PC-3 (cell line): ENCODE measurements at regions of chr10 and their contacts with region 1.

Region 1: DNA sequence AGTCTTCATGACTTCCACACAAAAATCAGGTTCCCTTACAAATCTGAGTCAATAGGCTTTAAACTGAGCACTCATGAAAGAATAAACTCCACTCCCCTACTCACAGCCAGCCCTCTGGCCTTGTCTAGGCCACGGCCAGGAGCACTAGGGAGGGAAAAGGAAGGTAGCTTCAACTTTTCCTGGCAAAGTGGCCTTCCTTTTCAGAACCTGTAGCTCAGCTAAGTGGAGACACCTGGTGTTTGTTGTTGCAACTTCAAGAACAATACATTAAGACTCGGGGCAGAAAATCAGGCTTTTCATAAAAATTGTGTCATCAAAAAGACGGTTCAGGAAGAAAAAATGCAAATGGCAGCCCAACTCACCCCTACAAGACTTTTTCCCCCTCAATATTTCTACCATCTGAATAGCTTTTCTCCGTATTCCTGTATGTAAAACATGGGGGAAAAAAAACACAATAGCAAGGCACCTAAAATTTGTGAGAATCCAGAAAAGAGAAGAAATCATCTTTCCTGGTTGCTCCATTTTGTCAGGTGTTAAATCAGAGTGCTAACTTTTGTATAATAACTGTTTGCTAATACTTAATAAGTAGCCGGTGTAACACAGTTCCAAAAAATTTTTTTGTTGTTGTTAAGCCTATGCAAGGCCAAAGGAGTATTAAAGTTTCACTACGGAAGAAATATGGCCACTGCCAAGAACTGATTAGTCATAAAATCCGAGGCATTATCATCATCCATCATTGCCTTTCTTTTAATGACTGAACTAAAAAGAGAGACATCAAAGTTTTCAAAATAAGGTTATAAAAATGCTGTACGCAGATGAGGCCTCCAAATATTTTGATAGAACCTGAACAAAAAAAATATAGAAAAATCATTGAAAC is 66.2 kb upstream of the ARID5B start:
- DNase-seq: peak; percentile 96
- ATAC-seq: peak; percentile 34
- H3K4me3 ChIP-seq: peak overlapping the region; percentile 25
- H3K27ac ChIP-seq: peak overlapping the region; percentile 66
- H3K4me1 ChIP-seq: peaks cover 50% of the 10 kb centered on the region
- H3K27me3 ChIP-seq: no peaks in the 10 kb centered on the region
- CTCF ChIP-seq: peak; percentile 99

Region 2: GRCh38 chr10:61465901-61466632 is 369.2 kb before region 1 on chr10:
- CTCF ChIA-PET with region 1: no interaction called
- POLR2A ChIA-PET with region 1: no interaction called
- intact Hi-C with region 1: loop called (anchors 5 kb)
- DNase-seq: no peak
- ATAC-seq: no peak
- H3K4me3 ChIP-seq: no peak overlapping the region
- H3K27ac ChIP-seq: no peak overlapping the region
- H3K4me1 ChIP-seq: peaks cover 29% of the 10 kb centered on the region
- H3K27me3 ChIP-seq: no peaks in the 10 kb centered on the region
- CTCF ChIP-seq: peak; percentile 53

Region 3: DNA sequence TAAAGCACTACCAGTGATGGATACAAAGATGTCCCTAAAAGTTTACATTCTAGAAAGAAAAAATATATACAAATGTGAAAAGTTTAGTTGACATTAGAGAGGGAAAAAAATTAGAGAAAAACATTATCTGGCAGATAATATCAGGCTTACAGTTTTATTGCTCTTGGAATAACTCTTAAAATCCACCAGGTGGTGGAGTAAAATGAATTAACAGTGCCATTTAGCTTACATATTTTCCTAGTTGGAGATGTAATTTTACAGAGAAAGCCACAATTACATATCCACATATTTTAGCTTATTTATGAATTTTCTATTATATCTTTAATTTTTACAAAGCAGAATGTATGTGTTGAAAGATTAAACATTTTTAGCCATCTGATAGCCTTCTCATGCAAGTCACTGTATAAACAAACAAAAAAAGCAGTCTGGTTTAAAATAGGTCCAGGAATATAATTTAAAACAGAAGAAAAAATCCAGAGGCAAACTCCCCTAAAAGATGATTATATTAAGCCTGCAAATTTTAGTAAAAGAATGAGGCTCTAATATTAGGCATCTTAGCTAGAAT is 166.1 kb before region 1 on chr10:
- CTCF ChIA-PET with region 1: no interaction called
- POLR2A ChIA-PET with region 1: no interaction called
- intact Hi-C with region 1: loop called (anchors 1 kb)
- DNase-seq: no peak
- ATAC-seq: peak; percentile 49; the same call in 1 of the 2 replicates
- H3K4me3 ChIP-seq: no peak overlapping the region
- H3K27ac ChIP-seq: no peak overlapping the region
- H3K4me1 ChIP-seq: no peaks in the 10 kb centered on the region
- H3K27me3 ChIP-seq: no peaks in the 10 kb centered on the region
- CTCF ChIP-seq: peak; percentile 56

Region 4: GRCh38 chr10:61793760-61794703 is 41.3 kb before region 1 on chr10:
- CTCF ChIA-PET with region 1: interaction called, 3 read pairs
- POLR2A ChIA-PET with region 1: interaction called, 3 read pairs
- intact Hi-C with region 1: loop called (anchors 1 kb)
- DNase-seq: peak; percentile 72
- ATAC-seq: peak; percentile 82
- H3K4me3 ChIP-seq: no peak overlapping the region
- H3K27ac ChIP-seq: no peak overlapping the region
- H3K4me1 ChIP-seq: peaks cover 23% of the 10 kb centered on the region
- H3K27me3 ChIP-seq: no peaks in the 10 kb centered on the region
- CTCF ChIP-seq: no peak

Region 5: GRCh38 chr10:61937631-61938351 is 102.5 kb after region 1 on chr10:
- CTCF ChIA-PET with region 1: interaction called, 20 read pairs
- POLR2A ChIA-PET with region 1: no interaction called
- intact Hi-C with region 1: loop called (anchors 1 kb)
- DNase-seq: peak; percentile 100
- ATAC-seq: peak; percentile 55
- H3K4me3 ChIP-seq: peak overlapping the region; percentile 5; the same call in 1 of the 2 replicates
- H3K27ac ChIP-seq: peak overlapping the region; percentile 81
- H3K4me1 ChIP-seq: peaks cover 59% of the 10 kb centered on the region
- H3K27me3 ChIP-seq: no peaks in the 10 kb centered on the region
- CTCF ChIP-seq: no peak

Region 6: GRCh38 chr10:62384057-62384446 is 548.7 kb after region 1 on chr10:
- CTCF ChIA-PET with region 1: no interaction called
- POLR2A ChIA-PET with region 1: no interaction called
- intact Hi-C with region 1: loop called (anchors 2 kb)
- DNase-seq: peak; percentile 100
- ATAC-seq: peak; percentile 74
- H3K4me3 ChIP-seq: peak overlapping the region; percentile 36
- H3K27ac ChIP-seq: peak overlapping the region; percentile 79
- H3K4me1 ChIP-seq: peaks cover 88% of the 10 kb centered on the region
- H3K27me3 ChIP-seq: no peaks in the 10 kb centered on the region
- CTCF ChIP-seq: no peak